CD8-positive, alpha-beta memory T cell (primary cell): ENCODE measurements at regions of chr9 and their contacts with region 1.

Region 1: GRCh38 chr9:93003552-93004407 is 54.7 kb upstream of the SUSD3 start:
- DNase-seq: peak; percentile 35 to 74 (median 57)
- H3K4me3 ChIP-seq: no peak overlapping the region
- H3K4me3 Mint-ChIP-seq: peak overlapping the region in 3 of 7 donors; percentile 41 to 44 (median 44)
- H3K27ac ChIP-seq: no peak overlapping the region
- H3K27ac Mint-ChIP-seq: peak overlapping the region; percentile 86 to 99 (median 92)
- H3K4me1 ChIP-seq: peaks cover 48% of the 10 kb centered on the region
- H3K4me1 Mint-ChIP-seq: peaks cover 47 to 63% (median 52%) of the 10 kb centered on the region in 3 donors
- H3K27me3 ChIP-seq: no peaks in the 10 kb centered on the region
- H3K27me3 Mint-ChIP-seq: no peaks in the 10 kb centered on the region

Region 2: GRCh38 chr9:92954049-92954861 is 49.5 kb before region 1 on chr9:
- CTCF ChIA-PET with region 1: interaction called, 30 read pairs
- POLR2A ChIA-PET with region 1: interaction called, 4 read pairs
- DNase-seq: peak; percentile 66 to 93 (median 89)
- H3K4me3 ChIP-seq: peak overlapping the region; percentile 63
- H3K4me3 Mint-ChIP-seq: peak overlapping the region; percentile 76 to 95 (median 85)
- H3K27ac ChIP-seq: peak overlapping the region; percentile 26
- H3K27ac Mint-ChIP-seq: peak overlapping the region; percentile 92 to 99 (median 97)
- H3K4me1 ChIP-seq: peaks cover 84% of the 10 kb centered on the region
- H3K4me1 Mint-ChIP-seq: peaks cover 79 to 89% (median 84%) of the 10 kb centered on the region in 3 donors
- H3K27me3 ChIP-seq: no peaks in the 10 kb centered on the region
- H3K27me3 Mint-ChIP-seq: no peaks in the 10 kb centered on the region

Region 3: DNA sequence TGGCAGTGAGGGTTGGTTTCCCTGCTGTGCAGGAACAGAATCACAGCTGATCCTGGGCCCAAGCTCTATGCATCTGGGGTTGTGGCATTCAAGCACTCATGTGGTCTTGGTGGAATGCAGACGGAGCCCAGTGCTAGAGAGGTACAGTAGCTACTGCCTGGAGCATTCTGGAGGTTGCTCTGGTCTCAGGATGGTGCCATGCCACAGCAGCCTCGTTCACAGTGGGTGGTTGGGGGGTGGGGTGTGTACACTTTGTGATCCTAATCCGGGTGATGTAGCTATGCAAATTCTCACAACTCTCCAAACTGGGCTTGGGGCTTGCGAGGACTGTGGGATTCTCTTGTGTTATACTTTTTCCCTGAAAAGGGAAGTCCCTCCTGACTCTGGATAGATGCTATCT is 11.2 kb before region 1 on chr9:
- CTCF ChIA-PET with region 1: interaction called, 10 read pairs
- POLR2A ChIA-PET with region 1: interaction called, 8 read pairs
- DNase-seq: no peak
- H3K4me3 ChIP-seq: peak overlapping the region; percentile 27
- H3K4me3 Mint-ChIP-seq: peak overlapping the region in 6 of 7 donors; percentile 1 to 53 (median 28)
- H3K27ac ChIP-seq: no peak overlapping the region
- H3K27ac Mint-ChIP-seq: peak overlapping the region; percentile 17 to 90 (median 72)
- H3K4me1 ChIP-seq: peaks cover 52% of the 10 kb centered on the region
- H3K4me1 Mint-ChIP-seq: peaks cover 93 to 100% (median 99%) of the 10 kb centered on the region in 3 donors
- H3K27me3 ChIP-seq: no peaks in the 10 kb centered on the region
- H3K27me3 Mint-ChIP-seq: no peaks in the 10 kb centered on the region

Region 4: GRCh38 chr9:93028448-93029006 is 24.7 kb after region 1 on chr9:
- CTCF ChIA-PET with region 1: interaction called, 52 read pairs
- POLR2A ChIA-PET with region 1: interaction called, 5 read pairs
- DNase-seq: peak; percentile 51 to 89 (median 83)
- H3K4me3 ChIP-seq: peak overlapping the region; percentile 60
- H3K4me3 Mint-ChIP-seq: peak overlapping the region; percentile 52 to 90 (median 80)
- H3K27ac ChIP-seq: peak overlapping the region; percentile 60
- H3K27ac Mint-ChIP-seq: peak overlapping the region; percentile 92 to 98 (median 95)
- H3K4me1 ChIP-seq: peaks cover 91% of the 10 kb centered on the region
- H3K4me1 Mint-ChIP-seq: peaks cover 64 to 87% (median 80%) of the 10 kb centered on the region in 3 donors
- H3K27me3 ChIP-seq: no peaks in the 10 kb centered on the region
- H3K27me3 Mint-ChIP-seq: no peaks in the 10 kb centered on the region

Region 5: GRCh38 chr9:93064392-93065134 is 60.8 kb after region 1 on chr9:
- CTCF ChIA-PET with region 1: interaction called, 15 read pairs
- POLR2A ChIA-PET with region 1: interaction called, 6 read pairs
- DNase-seq: peak; percentile 81 to 96 (median 90)
- H3K4me3 ChIP-seq: peak overlapping the region; percentile 72
- H3K4me3 Mint-ChIP-seq: peak overlapping the region; percentile 80 to 92 (median 82)
- H3K27ac ChIP-seq: peak overlapping the region; percentile 59
- H3K27ac Mint-ChIP-seq: peak overlapping the region; percentile 94 to 99 (median 98)
- H3K4me1 ChIP-seq: peaks cover 87% of the 10 kb centered on the region
- H3K4me1 Mint-ChIP-seq: peaks cover 74 to 98% (median 97%) of the 10 kb centered on the region in 3 donors
- H3K27me3 ChIP-seq: no peaks in the 10 kb centered on the region
- H3K27me3 Mint-ChIP-seq: peaks cover 0 to 2% of the 10 kb centered on the region in 2 donors

Region 6: GRCh38 chr9:93231121-93231694 is 227.4 kb after region 1 on chr9:
- CTCF ChIA-PET with region 1: no interaction called
- POLR2A ChIA-PET with region 1: no interaction called
- DNase-seq: no peak
- H3K4me3 ChIP-seq: no peak overlapping the region
- H3K4me3 Mint-ChIP-seq: peak overlapping the region in 1 of 7 donors; percentile 15
- H3K27ac ChIP-seq: no peak overlapping the region
- H3K27ac Mint-ChIP-seq: no peak overlapping the region
- H3K4me1 ChIP-seq: no peaks in the 10 kb centered on the region
- H3K4me1 Mint-ChIP-seq: peaks cover 0 to 8% (median under 1%) of the 10 kb centered on the region in 3 donors
- H3K27me3 ChIP-seq: peaks cover 9% of the 10 kb centered on the region
- H3K27me3 Mint-ChIP-seq: peaks cover 18 to 49% of the 10 kb centered on the region in 2 donors